ENCODE measurements at regions of chr1 and their contacts with region 1.

Region 1: GRCh38 chr1:37458528-37458927 is 15.9 kb upstream of the ZC3H12A start:
- DNase-seq: no peak
- ATAC-seq: no peak
- H3K4me3 Mint-ChIP-seq: no peak overlapping the region
- H3K27ac Mint-ChIP-seq: no peak overlapping the region
- H3K4me1 Mint-ChIP-seq: peaks cover 9% of the 10 kb centered on the region
- H3K27me3 Mint-ChIP-seq: no peaks in the 10 kb centered on the region

Region 2: DNA sequence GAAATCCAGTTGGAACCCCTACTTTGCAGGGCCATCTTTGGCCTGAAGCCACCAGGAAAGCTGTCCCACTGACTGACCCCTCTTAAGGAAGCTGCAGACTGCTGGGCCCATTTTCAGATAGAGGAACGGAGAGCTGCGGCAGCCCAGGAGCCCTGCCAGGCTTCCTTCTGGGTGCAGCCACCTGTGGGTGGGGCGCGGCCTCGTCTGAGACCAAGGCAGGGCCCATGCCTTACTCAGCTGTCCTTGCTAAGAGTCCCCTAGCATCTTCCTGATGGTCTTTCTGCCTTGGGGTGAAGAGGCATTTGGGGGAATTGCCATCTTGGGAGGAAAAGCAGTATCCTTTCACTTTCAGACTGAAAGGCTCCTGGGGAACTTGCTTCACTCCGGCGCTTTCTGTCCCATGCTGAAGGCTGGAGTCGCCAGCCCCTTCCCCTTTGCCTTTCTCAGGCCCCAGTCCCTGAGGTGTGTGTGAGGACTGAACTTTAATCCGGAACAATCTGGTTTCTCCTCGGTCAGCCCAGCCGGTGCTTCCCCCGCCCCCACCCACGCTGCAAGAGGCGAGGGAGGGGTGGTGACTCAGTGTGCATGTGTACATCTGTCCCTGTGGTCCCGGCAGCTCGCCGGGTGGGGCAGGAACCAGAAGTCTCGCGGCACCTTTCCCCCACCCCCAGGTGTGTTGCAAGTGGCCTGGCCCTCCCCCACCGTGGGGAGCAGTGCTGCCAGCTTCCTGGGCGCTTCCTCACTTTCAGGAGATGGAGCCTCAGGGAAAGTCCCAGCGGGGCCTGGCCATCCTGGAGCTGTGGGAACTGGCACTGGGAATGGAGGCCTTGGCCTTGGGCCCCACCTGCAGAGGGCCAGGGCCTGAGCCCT is 21.0 kb after region 1 on chr1:
- POLR2A ChIA-PET with region 1: interaction called, 17 read pairs
- DNase-seq: peak; percentile 80
- ATAC-seq: peak; percentile 71
- H3K4me3 Mint-ChIP-seq: peak overlapping the region; percentile 99
- H3K27ac Mint-ChIP-seq: peak overlapping the region; percentile 98
- H3K4me1 Mint-ChIP-seq: peaks cover 27% of the 10 kb centered on the region
- H3K27me3 Mint-ChIP-seq: no peaks in the 10 kb centered on the region

Region 3: DNA sequence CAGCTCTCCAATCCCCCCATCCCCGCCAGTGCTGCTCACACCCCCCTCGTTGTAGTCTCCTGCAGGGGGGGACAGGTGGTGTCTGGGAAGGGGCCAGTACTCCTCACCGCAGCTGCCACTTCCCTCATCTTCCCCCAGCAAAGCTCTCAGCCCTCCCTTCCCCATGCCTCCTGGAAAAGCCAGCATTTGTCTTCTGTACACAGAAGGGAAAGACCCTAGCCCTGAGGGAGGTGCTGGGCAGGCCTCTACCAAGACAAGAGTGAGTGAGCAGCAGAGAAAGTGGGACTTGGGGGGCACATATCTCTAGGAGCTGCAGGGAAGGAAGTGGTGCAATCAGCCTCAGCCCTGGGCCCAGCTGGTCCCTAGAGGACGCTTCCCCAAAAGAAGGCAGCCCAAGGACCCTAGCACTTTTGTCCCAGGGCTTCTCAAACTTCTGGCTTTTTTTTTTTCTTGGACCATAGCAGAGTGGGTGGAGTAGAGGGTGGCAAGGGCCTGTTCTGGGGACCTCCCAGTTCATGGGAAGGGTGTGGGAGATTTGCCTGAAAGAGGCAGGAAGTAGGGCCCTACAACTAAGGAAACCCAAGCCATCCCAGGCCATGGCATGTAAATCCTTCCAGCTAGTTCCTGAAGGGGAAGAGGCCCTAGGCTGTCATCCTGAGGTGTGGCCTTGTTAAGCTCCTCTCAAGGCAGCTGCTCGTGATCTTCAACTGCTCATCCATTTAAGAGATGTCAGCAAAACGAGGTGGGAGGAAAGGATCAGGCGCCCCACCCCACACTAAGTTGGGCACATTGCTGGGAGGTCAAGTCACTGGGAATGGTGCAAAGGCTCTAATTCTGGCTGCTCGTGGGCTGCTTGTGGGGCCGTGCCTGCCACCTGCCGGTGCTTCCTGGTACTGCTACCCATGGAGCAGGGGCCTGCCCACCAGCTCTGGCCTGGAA is 28.4 kb after region 1 on chr1:
- POLR2A ChIA-PET with region 1: interaction called, 27 read pairs
- DNase-seq: peak; percentile 88
- ATAC-seq: peak; percentile 50
- H3K4me3 Mint-ChIP-seq: no peak overlapping the region
- H3K27ac Mint-ChIP-seq: peak overlapping the region; percentile 71
- H3K4me1 Mint-ChIP-seq: peaks cover 11% of the 10 kb centered on the region
- H3K27me3 Mint-ChIP-seq: no peaks in the 10 kb centered on the region

Region 4: GRCh38 chr1:37509181-37509580 is 50.7 kb after region 1 on chr1:
- POLR2A ChIA-PET with region 1: no interaction called
- DNase-seq: no peak
- ATAC-seq: peak; percentile 44
- H3K4me3 Mint-ChIP-seq: no peak overlapping the region
- H3K27ac Mint-ChIP-seq: no peak overlapping the region
- H3K4me1 Mint-ChIP-seq: peaks cover 28% of the 10 kb centered on the region
- H3K27me3 Mint-ChIP-seq: no peaks in the 10 kb centered on the region

Measured in activated naive CD8-positive, alpha-beta T cell treated with anti-CD3 and anti-CD28 coated beads, Interleukin-2, amount 10 ng/mL, durations not matched to agents 7 days and 5 days (primary cell).